GM12878 (cell line): ENCODE measurements at regions of chr6 and their contacts with region 1.

Region 1: GRCh38 chr6:159104163-159104925 is 59.6 kb upstream of the TAGAP start:
- DNase-seq: no peak
- ATAC-seq: peak; percentile 77
- H3K4me3 ChIP-seq: no peak overlapping the region
- H3K27ac ChIP-seq: no peak overlapping the region; the same call in 1 of the 2 replicates
- H3K4me1 ChIP-seq: peaks cover 37% of the 10 kb centered on the region
- H3K27me3 ChIP-seq: no peaks in the 10 kb centered on the region
- CTCF ChIP-seq: peak; percentile 97 to 99 (median 98); a peak in 5 of 6 replicates
- EP300 ChIP-seq: no peak
- POLR2A ChIP-seq: 0 out of 2 replicates have a peak, but pooled peaks have one; percentile 22
- RAD21 ChIP-seq: peak; percentile 96

Region 2: GRCh38 chr6:158819213-158819909 is 285.0 kb before region 1 on chr6 and contains the start of gene EZR:
- CTCF ChIA-PET with region 1: interaction called, 3 read pairs
- POLR2A ChIA-PET with region 1: interaction called, 6 read pairs
- RAD21 ChIA-PET with region 1: interaction called, 3 read pairs
- SMC1A ChIA-PET with region 1: interaction called, 5 read pairs
- in situ Hi-C with region 1: no loop called
- intact Hi-C with region 1: loop called (anchors 10 kb)
- DNase-seq: no peak
- ATAC-seq: peak; percentile 66
- H3K4me3 ChIP-seq: peak within 1 kb of the TSS; percentile 82
- H3K27ac ChIP-seq: peak within 1 kb of the TSS; percentile 66
- H3K4me1 ChIP-seq: peaks cover 14% of the 10 kb centered on the region
- H3K27me3 ChIP-seq: no peaks in the 10 kb centered on the region
- CTCF ChIP-seq: no peak; a peak in 1 of 6 replicates
- EP300 ChIP-seq: no peak
- POLR2A ChIP-seq: peak; percentile 93
- RAD21 ChIP-seq: 0 out of 2 replicates have a peak, but pooled peaks have one; percentile 8
- polyA plus RNA-seq, gene EZR: 79.1 to 98.6 TPM

Region 3: DNA sequence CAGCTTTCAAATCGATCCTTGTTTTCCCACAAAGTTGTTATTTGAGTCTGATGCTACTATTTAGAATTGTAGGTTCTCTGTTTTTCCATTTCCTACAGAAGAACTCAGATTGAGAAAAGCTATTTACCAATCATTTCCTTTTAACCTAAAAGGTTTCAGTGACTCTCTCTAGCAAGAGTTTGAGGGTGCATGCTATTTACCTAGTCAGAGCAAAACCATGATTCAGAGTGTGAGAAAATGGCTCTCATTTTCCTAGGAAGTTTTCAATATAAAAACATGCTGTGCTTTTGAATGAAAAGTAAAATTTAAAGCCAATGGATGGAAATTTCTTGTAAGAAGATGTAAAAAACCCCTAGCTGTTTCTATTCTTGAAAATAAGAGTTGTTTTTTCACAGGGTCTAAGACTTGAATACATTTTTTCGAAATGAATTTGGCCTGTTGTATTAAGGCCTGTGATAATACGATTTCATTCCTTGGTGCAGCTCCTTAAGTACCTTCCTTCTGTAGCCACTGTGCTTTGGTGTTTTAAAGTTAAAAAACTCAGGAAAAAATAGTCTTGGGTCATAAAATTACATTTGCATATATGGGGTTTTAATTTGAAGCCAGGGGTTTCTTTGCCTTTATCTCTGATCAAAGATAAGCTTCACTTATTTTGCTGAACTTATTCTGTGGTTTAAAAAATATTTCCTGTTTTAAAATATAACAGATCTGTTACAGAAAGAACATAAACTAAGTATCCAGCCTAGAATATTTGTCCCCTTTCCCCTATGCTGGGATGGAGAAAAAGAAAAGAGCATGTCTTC is 86.4 kb before region 1 on chr6:
- CTCF ChIA-PET with region 1: interaction called, 631 read pairs
- POLR2A ChIA-PET with region 1: interaction called, 5 read pairs
- RAD21 ChIA-PET with region 1: interaction called, 259 read pairs
- SMC1A ChIA-PET with region 1: interaction called, 517 read pairs
- in situ Hi-C with region 1: no loop called
- intact Hi-C with region 1: no loop called
- DNase-seq: no peak
- ATAC-seq: peak; percentile 87
- H3K4me3 ChIP-seq: no peak overlapping the region
- H3K27ac ChIP-seq: no peak overlapping the region
- H3K4me1 ChIP-seq: peaks cover 8% of the 10 kb centered on the region
- H3K27me3 ChIP-seq: no peaks in the 10 kb centered on the region
- CTCF ChIP-seq: no peak
- EP300 ChIP-seq: no peak
- POLR2A ChIP-seq: no peak
- RAD21 ChIP-seq: no peak

Region 4: DNA sequence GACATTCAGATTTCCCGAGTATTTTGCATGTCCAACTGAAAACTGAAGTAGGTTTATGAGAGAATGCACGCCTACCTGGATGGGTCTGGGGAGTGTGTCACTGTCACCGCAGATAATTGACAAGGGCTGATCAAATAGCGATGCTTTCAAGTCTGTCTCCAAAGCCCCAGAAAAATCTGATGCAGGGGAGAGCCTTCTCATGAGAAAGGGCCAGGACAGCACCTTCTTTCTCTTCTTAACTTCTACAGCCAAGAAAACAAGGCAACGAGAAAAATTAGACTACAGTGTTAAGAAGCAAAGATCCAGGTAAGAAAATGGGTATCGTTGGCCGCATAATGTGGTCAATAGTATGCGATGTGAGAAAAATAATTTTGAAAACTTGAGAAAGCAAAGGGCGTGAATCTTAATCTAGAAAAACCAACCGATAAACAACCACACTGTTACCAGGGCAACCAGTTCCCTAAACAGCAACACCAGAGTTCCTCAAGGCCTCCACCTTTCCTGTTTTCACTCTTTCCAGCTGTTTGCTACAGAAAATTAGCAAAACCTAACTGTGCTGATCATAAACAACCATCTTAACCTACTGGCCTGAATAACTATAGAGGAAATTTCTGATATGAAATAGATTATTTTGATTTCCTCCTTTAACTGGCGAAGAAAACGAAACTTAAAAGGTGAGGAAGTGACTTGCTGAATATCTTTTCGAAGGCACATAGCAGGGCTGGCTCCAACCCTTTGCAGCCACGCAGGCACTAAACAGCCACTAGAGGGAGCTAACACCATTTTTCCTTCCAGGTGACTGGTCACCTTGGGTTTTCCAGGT is 62.1 kb before region 1 on chr6:
- CTCF ChIA-PET with region 1: interaction called, 481 read pairs
- POLR2A ChIA-PET with region 1: interaction called, 79 read pairs
- RAD21 ChIA-PET with region 1: interaction called, 298 read pairs
- SMC1A ChIA-PET with region 1: interaction called, 415 read pairs
- in situ Hi-C with region 1: loop called (anchors 5 kb)
- intact Hi-C with region 1: loop called (anchors 1 kb)
- DNase-seq: peak; percentile 69
- ATAC-seq: peak; percentile 53
- H3K4me3 ChIP-seq: 0 out of 2 replicates have a peak overlapping the region, but pooled peaks have one; percentile 60
- H3K27ac ChIP-seq: peak overlapping the region; percentile 59
- H3K4me1 ChIP-seq: peaks cover 43% of the 10 kb centered on the region
- H3K27me3 ChIP-seq: no peaks in the 10 kb centered on the region
- CTCF ChIP-seq: peak; percentile 94 to 99 (median 96)
- EP300 ChIP-seq: 0 out of 4 replicates have a peak, but pooled peaks of 1 of the 2 experiments have one; percentile 23
- POLR2A ChIP-seq: no peak
- RAD21 ChIP-seq: peak; percentile 92

Region 5: DNA sequence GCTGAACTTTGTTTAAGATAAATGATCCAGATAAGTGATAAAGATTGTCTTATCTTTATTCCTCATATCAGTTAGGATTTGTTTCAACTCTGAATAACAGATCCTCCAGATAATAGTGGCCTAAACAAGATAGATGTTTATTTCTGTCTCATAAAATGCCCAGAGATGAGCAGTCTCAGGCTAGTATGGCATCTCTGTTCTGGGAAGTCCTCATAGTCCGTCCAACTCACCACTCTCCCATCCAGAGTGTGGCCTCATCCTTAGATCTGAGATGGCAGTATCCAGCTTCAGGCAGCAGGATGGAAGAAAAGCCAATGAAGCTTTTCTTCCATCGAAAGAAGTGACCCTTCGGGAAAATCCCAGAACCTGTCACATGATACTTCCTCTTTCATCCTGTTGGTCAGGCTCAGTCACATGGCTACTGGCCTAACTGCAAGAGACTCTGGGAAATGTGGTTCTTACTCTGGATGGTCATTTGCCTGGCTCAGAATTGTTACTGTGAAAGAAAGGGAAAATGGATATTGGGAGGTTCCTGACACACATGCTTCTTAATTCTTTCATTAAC is 30.1 kb before region 1 on chr6:
- CTCF ChIA-PET with region 1: interaction called, 6 read pairs
- POLR2A ChIA-PET with region 1: interaction called, 4 read pairs
- RAD21 ChIA-PET with region 1: interaction called, 3 read pairs
- SMC1A ChIA-PET with region 1: interaction called, 10 read pairs
- in situ Hi-C with region 1: no loop called
- intact Hi-C with region 1: no loop called
- DNase-seq: no peak
- ATAC-seq: peak; percentile 97
- H3K4me3 ChIP-seq: no peak overlapping the region
- H3K27ac ChIP-seq: no peak overlapping the region
- H3K4me1 ChIP-seq: no peaks in the 10 kb centered on the region
- H3K27me3 ChIP-seq: peaks cover 0 to 5% of the 10 kb centered on the region in 2 experiments; a peak in 2 of 4 replicates
- CTCF ChIP-seq: no peak
- EP300 ChIP-seq: no peak
- POLR2A ChIP-seq: no peak
- RAD21 ChIP-seq: no peak

Region 6: DNA sequence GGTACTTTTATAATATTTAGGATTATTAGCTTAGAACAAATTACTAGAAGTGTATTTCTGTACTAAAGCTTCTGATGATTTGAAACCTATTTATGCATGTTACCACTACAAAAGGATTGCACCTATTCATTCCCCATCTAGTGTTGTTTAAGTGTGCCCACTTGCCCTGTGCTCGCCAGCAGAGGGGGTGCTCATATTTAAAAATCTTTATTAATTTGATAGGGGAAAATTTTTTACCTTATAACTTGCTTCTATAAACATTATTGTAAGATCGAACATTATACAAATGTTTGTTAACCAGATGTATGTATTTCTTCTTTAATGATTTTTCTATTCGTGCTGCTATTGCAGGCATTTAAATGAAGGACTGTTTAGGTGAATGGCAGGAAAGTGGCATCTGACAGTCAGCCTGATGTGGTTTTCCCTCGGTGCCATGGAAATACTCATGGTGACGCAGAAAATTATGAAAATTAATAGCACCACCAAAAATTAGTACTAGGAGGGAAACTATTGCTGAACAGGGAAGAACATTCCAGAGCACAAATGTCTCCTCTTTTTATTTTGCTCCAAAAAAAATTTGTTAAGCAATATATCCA is 20.8 kb after region 1 on chr6:
- CTCF ChIA-PET with region 1: interaction called, 529 read pairs
- POLR2A ChIA-PET with region 1: interaction called, 36 read pairs
- RAD21 ChIA-PET with region 1: interaction called, 13 read pairs
- SMC1A ChIA-PET with region 1: interaction called, 292 read pairs
- in situ Hi-C with region 1: no loop called
- intact Hi-C with region 1: no loop called
- DNase-seq: no peak
- ATAC-seq: no peak
- H3K4me3 ChIP-seq: no peak overlapping the region
- H3K27ac ChIP-seq: no peak overlapping the region
- H3K4me1 ChIP-seq: peaks cover 19% of the 10 kb centered on the region
- H3K27me3 ChIP-seq: peaks cover 0 to 3% of the 10 kb centered on the region in 2 experiments; a peak in 1 of 4 replicates
- CTCF ChIP-seq: 0 out of 6 replicates have a peak, but pooled peaks of 2 of the 3 experiments have one; percentile 5 to 9
- EP300 ChIP-seq: no peak
- POLR2A ChIP-seq: no peak
- RAD21 ChIP-seq: 0 out of 2 replicates have a peak, but pooled peaks have one; percentile 2

Region 7: GRCh38 chr6:159163901-159164370 is 59.6 kb after region 1 on chr6:
- CTCF ChIA-PET with region 1: no interaction called
- POLR2A ChIA-PET with region 1: no interaction called
- RAD21 ChIA-PET with region 1: no interaction called
- SMC1A ChIA-PET with region 1: no interaction called
- in situ Hi-C with region 1: no loop called
- intact Hi-C with region 1: no loop called
- DNase-seq: no peak
- ATAC-seq: no peak
- H3K4me3 ChIP-seq: no peak overlapping the region
- H3K27ac ChIP-seq: no peak overlapping the region
- H3K4me1 ChIP-seq: no peaks in the 10 kb centered on the region
- H3K27me3 ChIP-seq: peaks cover 12 to 14% of the 10 kb centered on the region in 2 experiments
- CTCF ChIP-seq: no peak
- EP300 ChIP-seq: no peak
- POLR2A ChIP-seq: no peak
- RAD21 ChIP-seq: no peak